ENCODE measurements at regions of chr4 and their contacts with region 1.

Region 1: DNA sequence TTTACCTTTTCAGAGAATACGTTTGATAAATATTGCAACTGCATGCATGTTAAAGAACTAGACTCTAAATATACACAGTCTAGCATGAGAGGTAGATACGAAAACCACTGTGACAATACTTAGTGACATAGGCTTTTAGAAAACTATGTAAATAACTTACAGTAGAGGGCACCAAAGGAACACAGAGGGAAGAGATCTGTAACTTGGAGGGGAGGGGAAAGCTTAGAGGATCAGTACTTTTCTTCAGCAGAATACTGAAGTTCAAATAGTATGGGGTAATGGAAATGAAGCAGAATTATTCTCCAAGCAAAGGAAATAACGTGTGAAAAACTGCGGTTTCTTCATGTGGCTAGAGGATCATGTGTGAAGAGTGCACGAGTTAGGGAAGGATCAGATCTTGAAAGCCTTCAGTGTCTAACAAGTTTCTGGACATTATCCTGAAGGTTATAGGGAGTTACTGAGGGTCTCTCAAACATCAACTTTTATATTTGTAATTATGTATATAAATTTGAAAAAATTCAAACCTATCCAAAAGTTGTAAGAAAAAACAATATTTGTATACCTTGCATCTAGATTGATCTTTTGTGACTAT is 264.3 kb downstream of the NPFFR2 start:
- DNase-seq: peak; percentile 58
- H3K4me3 Mint-ChIP-seq: no peak overlapping the region
- H3K27ac Mint-ChIP-seq: no peak overlapping the region
- H3K4me1 Mint-ChIP-seq: no peaks in the 10 kb centered on the region
- H3K27me3 Mint-ChIP-seq: no peaks in the 10 kb centered on the region
- CTCF ChIP-seq: peak; percentile 78

Region 2: DNA sequence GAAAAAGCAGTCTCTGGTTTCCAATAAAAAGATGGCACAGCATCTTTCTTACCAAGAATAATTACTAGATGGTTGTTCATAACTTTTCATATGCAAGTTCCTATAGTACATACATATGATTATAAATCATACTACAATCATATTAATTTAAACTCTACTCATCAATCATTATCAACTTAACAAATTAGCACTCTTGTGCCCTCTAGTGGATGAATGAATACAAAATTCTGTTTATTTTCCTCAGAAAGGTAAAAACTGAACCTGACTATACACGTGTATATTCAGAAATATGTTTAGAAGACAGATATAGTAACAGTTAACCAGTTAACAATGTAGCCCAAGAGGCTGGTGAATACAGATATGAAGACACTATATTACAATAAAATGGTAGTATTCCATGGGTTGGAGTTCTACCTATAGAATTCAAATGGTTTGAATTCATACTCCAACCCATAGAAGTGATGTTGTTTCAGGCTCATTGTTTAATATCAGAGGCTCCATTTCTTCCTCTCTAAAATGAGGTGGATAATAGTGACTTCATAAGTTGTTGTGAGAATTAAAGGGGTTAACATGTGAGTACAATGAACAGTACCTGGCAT is 172.9 kb after region 1 on chr4:
- CTCF ChIA-PET with region 1: interaction called, 32 read pairs
- POLR2A ChIA-PET with region 1: no interaction called
- intact Hi-C with region 1: loop called (anchors 1 kb)
- DNase-seq: peak; percentile 54
- H3K4me3 Mint-ChIP-seq: no peak overlapping the region
- H3K27ac Mint-ChIP-seq: no peak overlapping the region
- H3K4me1 Mint-ChIP-seq: peaks cover 7% of the 10 kb centered on the region
- H3K27me3 Mint-ChIP-seq: no peaks in the 10 kb centered on the region
- CTCF ChIP-seq: peak; percentile 55

Region 3: GRCh38 chr4:72489267-72489666 is 193.2 kb after region 1 on chr4:
- CTCF ChIA-PET with region 1: interaction called, 34 read pairs
- POLR2A ChIA-PET with region 1: no interaction called
- intact Hi-C with region 1: no loop called
- DNase-seq: peak; percentile 69
- H3K4me3 Mint-ChIP-seq: no peak overlapping the region
- H3K27ac Mint-ChIP-seq: peak overlapping the region; percentile 93
- H3K4me1 Mint-ChIP-seq: peaks cover 30% of the 10 kb centered on the region
- H3K27me3 Mint-ChIP-seq: no peaks in the 10 kb centered on the region
- CTCF ChIP-seq: no peak

Region 4: GRCh38 chr4:72496112-72496511 is 200.1 kb after region 1 on chr4:
- CTCF ChIA-PET with region 1: interaction called, 34 read pairs
- POLR2A ChIA-PET with region 1: no interaction called
- intact Hi-C with region 1: loop called (anchors 1 kb)
- DNase-seq: peak; percentile 20
- H3K4me3 Mint-ChIP-seq: no peak overlapping the region
- H3K27ac Mint-ChIP-seq: no peak overlapping the region
- H3K4me1 Mint-ChIP-seq: no peaks in the 10 kb centered on the region
- H3K27me3 Mint-ChIP-seq: no peaks in the 10 kb centered on the region
- CTCF ChIP-seq: peak; percentile 25

Region 5: GRCh38 chr4:73019462-73020047 is 723.5 kb after region 1 on chr4:
- CTCF ChIA-PET with region 1: interaction called, 12 read pairs
- POLR2A ChIA-PET with region 1: no interaction called
- intact Hi-C with region 1: loop called (anchors 2 kb)
- DNase-seq: peak; percentile 66
- H3K4me3 Mint-ChIP-seq: no peak overlapping the region
- H3K27ac Mint-ChIP-seq: no peak overlapping the region
- H3K4me1 Mint-ChIP-seq: no peaks in the 10 kb centered on the region
- H3K27me3 Mint-ChIP-seq: peaks cover 9% of the 10 kb centered on the region
- CTCF ChIP-seq: peak; percentile 62